Dendritic cell treated with granulocyte-macrophage colony-stimulating factor and Interleukin-4, amounts not matched to agents 40 ng/mL and 50 ng/mL, for 4 days (primary cell): ENCODE measurements at regions of chr10 and their contacts with region 1.

Region 1: DNA sequence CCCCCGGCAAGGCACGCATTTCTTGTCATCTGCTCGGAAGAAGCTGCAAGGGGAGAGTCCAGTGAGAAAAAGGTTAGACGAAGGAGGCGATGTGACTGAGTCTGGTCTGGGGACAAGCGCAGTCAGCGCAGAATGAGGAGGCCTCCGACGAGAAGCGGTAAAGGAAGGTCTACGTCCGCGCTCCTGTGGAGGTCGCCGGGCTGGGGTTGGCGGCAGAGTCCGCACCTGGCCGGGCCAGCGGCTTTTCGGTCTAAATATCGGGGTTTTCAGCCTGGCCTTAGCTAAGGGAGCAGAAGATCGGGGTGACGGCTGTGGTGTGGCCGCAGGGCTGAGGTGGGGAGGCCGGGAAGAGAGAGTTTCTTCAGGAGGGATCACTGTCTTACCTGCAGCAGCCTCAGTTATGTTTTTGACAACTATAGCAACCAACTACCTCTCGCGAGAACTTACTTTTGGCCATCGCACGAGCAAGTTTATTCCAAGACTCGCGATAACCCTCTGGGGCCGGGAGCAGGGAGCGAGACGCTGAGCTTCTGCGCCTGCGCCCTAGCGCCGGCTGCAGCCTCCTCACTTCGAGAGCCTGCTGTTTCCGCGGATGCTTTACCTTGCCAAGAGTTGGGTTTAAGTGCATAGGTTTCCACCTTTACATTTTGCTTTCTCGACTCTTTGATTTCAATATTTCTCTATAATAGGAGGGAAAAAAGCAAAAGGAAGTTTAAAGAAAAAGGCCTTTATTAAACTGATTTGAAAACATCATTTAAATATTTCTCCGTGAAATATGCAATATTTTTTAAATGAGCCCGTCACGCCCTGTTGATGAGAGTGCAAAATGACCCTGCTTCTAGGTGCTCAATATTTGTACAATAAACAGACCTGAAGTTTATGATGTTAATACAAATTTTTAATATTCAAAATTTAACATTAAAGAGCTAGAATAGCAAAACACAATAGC is at the start of gene CFAP70:
- H3K4me3 Mint-ChIP-seq: peak within 1 kb of the TSS; percentile 91
- H3K27ac Mint-ChIP-seq: peak within 1 kb of the TSS; percentile 92
- H3K4me1 Mint-ChIP-seq: peaks cover 28% of the 10 kb centered on the region
- H3K27me3 Mint-ChIP-seq: peaks cover 12% of the 10 kb centered on the region

Region 2: GRCh38 chr10:73252445-73253224 is 106.0 kb before region 1 on chr10 and contains the start of gene MRPS16:
- intact Hi-C with region 1: loop called (anchors 5 kb)
- H3K4me3 Mint-ChIP-seq: peak within 1 kb of the TSS; percentile 95
- H3K27ac Mint-ChIP-seq: peak within 1 kb of the TSS; percentile 97
- H3K4me1 Mint-ChIP-seq: peaks cover 25% of the 10 kb centered on the region
- H3K27me3 Mint-ChIP-seq: no peaks in the 10 kb centered on the region